ENCODE measurements at regions of chr11 and their contacts with region 1.

Region 1: GRCh38 chr11:83249972-83250593 is 36.1 kb downstream of the CCDC90B start:
- DNase-seq: peak; percentile 30
- H3K4me3 Mint-ChIP-seq: no peak overlapping the region
- H3K27ac Mint-ChIP-seq: no peak overlapping the region
- H3K4me1 Mint-ChIP-seq: no peaks in the 10 kb centered on the region
- H3K27me3 Mint-ChIP-seq: no peaks in the 10 kb centered on the region

Region 2: DNA sequence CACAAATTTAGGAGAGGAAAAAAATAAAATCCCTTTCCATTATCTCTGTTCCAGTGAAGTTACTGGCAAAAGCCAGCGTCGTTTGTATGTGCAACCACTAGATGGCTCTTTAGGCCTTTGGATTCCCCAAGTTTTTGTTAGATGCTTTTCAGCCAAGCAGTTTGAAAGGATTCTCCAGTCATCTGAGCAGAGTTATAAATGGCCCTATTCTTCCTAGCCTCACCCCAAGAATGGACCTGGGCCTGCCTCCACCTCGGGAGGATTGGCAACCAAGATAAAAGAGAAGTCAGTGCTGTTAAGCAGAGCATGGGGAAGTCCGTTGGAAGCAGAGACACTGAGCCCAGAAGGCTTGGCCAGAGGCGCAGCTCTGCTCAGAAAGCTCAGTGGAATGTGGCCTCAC is 531.8 kb before region 1 on chr11:
- CTCF ChIA-PET with region 1: interaction called, 10 read pairs
- intact Hi-C with region 1: loop called (anchors 1 kb)
- DNase-seq: peak; percentile 44
- H3K4me3 Mint-ChIP-seq: no peak overlapping the region
- H3K27ac Mint-ChIP-seq: no peak overlapping the region
- H3K4me1 Mint-ChIP-seq: peaks cover 4% of the 10 kb centered on the region
- H3K27me3 Mint-ChIP-seq: no peaks in the 10 kb centered on the region

Region 3: DNA sequence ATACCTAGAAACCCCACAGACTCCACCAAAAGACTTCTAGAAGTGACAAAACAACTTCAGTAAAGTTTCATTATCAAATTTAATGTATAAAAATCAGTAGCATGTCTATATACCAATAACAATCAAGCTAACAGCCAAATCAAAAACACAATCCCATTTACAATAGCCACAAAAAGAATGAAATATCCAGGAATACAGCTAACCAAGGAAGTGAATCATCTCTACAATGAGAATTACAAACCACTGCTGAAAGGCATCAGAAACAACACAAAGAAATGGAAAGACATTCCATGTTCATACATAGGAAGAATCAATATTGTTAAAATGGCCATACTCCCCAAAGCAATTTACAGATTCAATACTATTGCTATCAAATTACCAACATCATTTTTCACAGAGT is 395.8 kb before region 1 on chr11:
- CTCF ChIA-PET with region 1: no interaction called
- intact Hi-C with region 1: no loop called
- DNase-seq: no peak
- H3K4me3 Mint-ChIP-seq: no peak overlapping the region
- H3K27ac Mint-ChIP-seq: no peak overlapping the region
- H3K4me1 Mint-ChIP-seq: no peaks in the 10 kb centered on the region
- H3K27me3 Mint-ChIP-seq: no peaks in the 10 kb centered on the region

Region 4: GRCh38 chr11:82906244-82906654 is 343.8 kb before region 1 on chr11:
- CTCF ChIA-PET with region 1: interaction called, 9 read pairs
- intact Hi-C with region 1: loop called (anchors 1 kb)
- DNase-seq: no peak
- H3K4me3 Mint-ChIP-seq: no peak overlapping the region
- H3K27ac Mint-ChIP-seq: no peak overlapping the region
- H3K4me1 Mint-ChIP-seq: peaks cover 61% of the 10 kb centered on the region
- H3K27me3 Mint-ChIP-seq: no peaks in the 10 kb centered on the region

Region 5: GRCh38 chr11:82927254-82927880 is 322.7 kb before region 1 on chr11:
- CTCF ChIA-PET with region 1: interaction called, 8 read pairs
- intact Hi-C with region 1: loop called (anchors 1 kb)
- DNase-seq: peak; percentile 33
- H3K4me3 Mint-ChIP-seq: no peak overlapping the region
- H3K27ac Mint-ChIP-seq: no peak overlapping the region
- H3K4me1 Mint-ChIP-seq: peaks cover 33% of the 10 kb centered on the region
- H3K27me3 Mint-ChIP-seq: no peaks in the 10 kb centered on the region

Region 6: GRCh38 chr11:83087035-83087434 is 163.0 kb before region 1 on chr11:
- CTCF ChIA-PET with region 1: interaction called, 5 read pairs
- intact Hi-C with region 1: loop called (anchors 1 kb)
- DNase-seq: no peak
- H3K4me3 Mint-ChIP-seq: no peak overlapping the region
- H3K27ac Mint-ChIP-seq: no peak overlapping the region
- H3K4me1 Mint-ChIP-seq: peaks cover 14% of the 10 kb centered on the region
- H3K27me3 Mint-ChIP-seq: no peaks in the 10 kb centered on the region

Region 7: GRCh38 chr11:83193315-83194280 is 56.5 kb before region 1 on chr11 and contains the start of gene ANKRD42:
- CTCF ChIA-PET with region 1: no interaction called
- intact Hi-C with region 1: loop called (anchors 2 kb)
- DNase-seq: peak; percentile 90
- H3K4me3 Mint-ChIP-seq: peak within 1 kb of the TSS; percentile 95
- H3K27ac Mint-ChIP-seq: peak within 1 kb of the TSS; percentile 95
- H3K4me1 Mint-ChIP-seq: peaks cover 44% of the 10 kb centered on the region
- H3K27me3 Mint-ChIP-seq: no peaks in the 10 kb centered on the region
- total RNA-seq, gene ANKRD42: 2.3 to 2.7 TPM

Region 8: DNA sequence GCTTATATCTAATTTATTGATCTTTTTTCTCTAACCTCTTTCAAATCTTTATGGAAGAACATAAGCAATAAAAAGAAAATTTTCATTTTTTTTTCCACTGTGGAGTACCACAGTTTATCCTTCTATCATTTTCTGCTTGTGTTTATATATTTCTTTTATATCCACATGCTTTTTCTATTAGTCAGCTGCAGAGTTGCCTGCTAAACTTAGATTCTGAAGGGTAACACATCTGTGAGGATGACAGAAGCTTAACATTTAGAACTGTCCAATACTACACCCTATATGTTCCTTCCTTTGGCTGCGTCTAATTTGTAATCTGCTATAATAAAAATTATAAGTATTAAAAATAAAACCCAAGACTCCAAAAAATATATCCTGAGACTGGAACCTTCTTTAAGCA is 15.2 kb after region 1 on chr11:
- CTCF ChIA-PET with region 1: interaction called, 4 read pairs
- intact Hi-C with region 1: loop called (anchors 1 kb)
- DNase-seq: no peak
- H3K4me3 Mint-ChIP-seq: no peak overlapping the region
- H3K27ac Mint-ChIP-seq: no peak overlapping the region
- H3K4me1 Mint-ChIP-seq: peaks cover 7% of the 10 kb centered on the region
- H3K27me3 Mint-ChIP-seq: no peaks in the 10 kb centered on the region

Region 9: DNA sequence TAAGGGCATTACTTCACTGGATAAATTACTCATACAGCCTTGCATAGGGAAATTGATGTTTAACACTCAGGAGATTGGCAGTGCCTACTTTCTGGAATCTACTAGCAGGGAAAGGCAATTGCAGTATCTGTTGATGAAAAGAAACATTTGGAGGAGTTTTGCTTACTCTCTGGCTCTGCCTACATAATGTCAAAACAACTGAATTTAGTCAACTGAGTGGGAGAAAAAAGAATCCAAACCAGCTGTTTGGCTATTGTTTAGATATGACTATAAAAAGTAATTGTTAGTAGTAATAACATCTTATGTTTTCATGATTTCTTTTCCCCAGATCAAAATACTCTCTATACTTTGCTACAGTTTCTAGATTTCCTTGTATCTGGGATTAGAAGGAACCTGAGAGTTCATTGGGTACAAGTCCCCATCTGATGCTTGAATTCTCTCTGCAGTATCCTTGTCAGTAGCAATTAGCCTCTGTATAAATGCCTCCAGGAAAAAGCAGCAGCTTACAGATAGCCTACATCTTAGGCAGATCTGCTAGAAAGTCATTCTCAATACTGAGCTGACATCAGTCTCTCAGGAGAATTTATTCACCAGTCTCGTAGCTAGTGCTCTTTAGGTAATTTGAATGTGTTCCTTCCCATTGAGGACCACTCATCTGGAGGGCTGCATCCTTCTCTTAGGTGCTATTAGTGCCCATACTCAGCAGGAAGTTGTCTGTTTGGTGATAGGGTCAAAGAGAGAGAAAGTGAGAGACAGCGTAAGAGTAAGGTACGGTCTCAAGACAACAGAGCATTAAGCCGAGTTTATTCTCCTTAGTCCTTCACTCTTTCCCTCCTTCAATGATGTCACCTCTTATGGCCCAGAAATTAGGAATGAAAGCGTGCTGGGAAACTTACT is 222.0 kb after region 1 on chr11:
- CTCF ChIA-PET with region 1: no interaction called
- intact Hi-C with region 1: no loop called
- DNase-seq: no peak
- H3K4me3 Mint-ChIP-seq: no peak overlapping the region
- H3K27ac Mint-ChIP-seq: no peak overlapping the region
- H3K4me1 Mint-ChIP-seq: no peaks in the 10 kb centered on the region
- H3K27me3 Mint-ChIP-seq: peaks cover 2% of the 10 kb centered on the region

Region 10: GRCh38 chr11:83990160-83990733 is 740.2 kb after region 1 on chr11:
- CTCF ChIA-PET with region 1: no interaction called
- intact Hi-C with region 1: no loop called
- DNase-seq: no peak
- H3K4me3 Mint-ChIP-seq: no peak overlapping the region
- H3K27ac Mint-ChIP-seq: no peak overlapping the region
- H3K4me1 Mint-ChIP-seq: no peaks in the 10 kb centered on the region
- H3K27me3 Mint-ChIP-seq: no peaks in the 10 kb centered on the region